ENCODE measurements at regions of chr1 and their contacts with region 1.

Region 1: GRCh38 chr1:173536254-173536653 is 59.1 kb downstream of the PRDX6 start:
- DNase-seq: no peak
- ATAC-seq: no peak
- H3K4me3 ChIP-seq: no peak overlapping the region
- H3K27ac ChIP-seq: no peak overlapping the region
- H3K4me1 ChIP-seq: peaks cover 0 to 6% (median 0%) of the 10 kb centered on the region in 9 donors
- H3K27me3 ChIP-seq: no peaks in the 10 kb centered on the region
- CTCF ChIP-seq: no peak

Region 2: DNA sequence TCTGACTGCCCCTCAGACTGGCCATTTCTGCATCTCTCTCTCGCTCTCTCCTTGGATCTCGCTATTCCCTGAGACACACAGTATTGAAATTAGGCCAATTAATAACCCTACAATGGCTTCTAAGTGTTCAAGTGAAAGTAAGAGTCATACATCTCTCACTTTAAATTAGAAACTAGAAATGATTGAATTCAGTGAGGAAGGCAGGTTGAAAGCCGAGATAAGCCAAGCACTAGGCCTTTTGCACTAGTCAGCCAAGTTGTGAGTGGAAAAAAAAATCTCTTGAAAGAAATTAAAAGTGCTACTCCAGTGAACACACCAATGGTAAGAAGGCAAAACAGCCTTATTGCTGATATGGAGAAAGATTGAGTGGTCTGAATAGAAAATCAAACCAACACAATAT is 15.4 kb after region 1 on chr1:
- intact Hi-C with region 1: loop called in 1 of 10 experiments (anchors 1 kb)
- DNase-seq: no peak
- ATAC-seq: no peak
- H3K4me3 ChIP-seq: no peak overlapping the region
- H3K27ac ChIP-seq: peak overlapping the region in 1 of 10 donors; percentile 14
- H3K4me1 ChIP-seq: peaks cover 0 to 3% (median 0%) of the 10 kb centered on the region in 9 donors
- H3K27me3 ChIP-seq: no peaks in the 10 kb centered on the region
- CTCF ChIP-seq: no peak

Region 3: DNA sequence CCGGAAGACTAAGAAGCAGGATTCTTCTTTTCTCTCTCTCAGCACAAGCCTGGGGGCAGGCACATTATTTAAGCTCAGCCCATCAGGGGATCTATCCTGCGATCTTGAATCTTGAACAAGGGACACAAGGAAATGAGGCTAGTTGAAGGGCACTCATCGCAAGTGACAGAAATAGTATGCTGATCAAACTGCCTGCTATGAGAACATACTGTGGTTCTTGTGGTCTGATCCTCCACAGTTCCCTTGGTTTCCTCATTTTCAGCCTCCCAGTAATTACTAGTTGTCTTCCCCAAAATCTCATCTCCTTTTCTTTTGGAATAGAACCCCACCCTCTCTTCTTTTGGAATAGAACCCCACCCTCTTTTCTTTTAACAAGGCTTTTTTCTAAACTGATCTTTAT is 126.9 kb after region 1 on chr1:
- intact Hi-C with region 1: no loop called
- DNase-seq: no peak
- ATAC-seq: no peak
- H3K4me3 ChIP-seq: no peak overlapping the region
- H3K27ac ChIP-seq: no peak overlapping the region
- H3K4me1 ChIP-seq: no peaks in the 10 kb centered on the region
- H3K27me3 ChIP-seq: peaks cover 0 to 8% (median 0%) of the 10 kb centered on the region in 7 donors
- CTCF ChIP-seq: no peak